Activated CD4-positive, alpha-beta T cell treated with anti-CD3 and anti-CD28 coated beads for 36 hours (primary cell): ENCODE measurements at regions of chr16 and their contacts with region 1.

Region 1: DNA sequence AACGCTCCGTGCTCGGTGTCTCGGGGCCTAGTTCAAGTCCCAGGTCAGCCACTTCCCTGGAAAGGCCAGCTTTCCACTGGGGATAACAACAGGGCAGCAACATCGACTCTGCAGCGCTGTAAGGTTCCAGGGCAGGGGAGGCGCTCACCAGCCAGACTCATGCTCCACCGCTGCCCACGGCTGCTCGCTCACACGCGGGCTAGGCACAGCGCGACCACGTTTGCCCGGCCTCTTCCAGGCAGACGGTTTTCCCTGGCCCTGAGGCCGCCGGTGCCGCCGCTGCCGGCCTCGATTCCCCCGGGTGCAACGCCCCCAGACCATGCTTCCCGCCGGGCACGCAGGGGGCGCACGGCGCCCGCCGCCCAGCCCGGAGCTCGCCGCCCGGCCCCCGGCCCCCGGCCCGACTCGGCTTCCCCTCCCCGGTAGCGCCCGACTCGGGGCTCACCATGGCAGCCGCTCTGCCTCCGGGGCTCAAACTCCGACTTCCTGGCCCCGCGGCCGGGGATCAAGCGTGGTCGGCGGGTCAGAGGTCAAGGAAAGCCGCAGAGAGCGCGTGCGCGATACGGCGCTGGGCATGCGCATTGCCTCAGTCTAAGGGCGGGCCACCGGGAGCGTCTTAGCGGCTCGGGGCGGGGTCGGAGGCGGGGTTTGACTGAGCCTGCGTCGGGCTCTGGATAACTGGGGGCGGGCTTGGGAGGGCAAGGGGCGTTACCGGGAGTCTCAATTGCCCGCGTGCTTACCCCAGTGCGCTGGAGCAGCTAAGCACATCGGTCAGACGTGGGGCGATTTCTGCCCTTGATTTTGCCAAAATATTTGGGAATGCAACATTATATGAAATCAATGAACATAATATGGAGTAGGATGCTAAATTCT is at the start of gene PAM16:
- DNase-seq: peak; percentile 99
- ATAC-seq: peak; percentile 96
- H3K4me3 Mint-ChIP-seq: peak within 1 kb of the TSS; percentile 89
- H3K27ac Mint-ChIP-seq: peak within 1 kb of the TSS; percentile 88
- H3K4me1 Mint-ChIP-seq: peaks cover 20% of the 10 kb centered on the region
- H3K27me3 Mint-ChIP-seq: no peaks in the 10 kb centered on the region
- total RNA-seq, gene PAM16: 62.8 to 67.8 TPM

Region 2: GRCh38 chr16:4116337-4117249 is 234.4 kb before region 1 on chr16 and contains the start of gene ADCY9:
- CTCF ChIA-PET with region 1: no interaction called
- POLR2A ChIA-PET with region 1: no interaction called
- intact Hi-C with region 1: loop called in 1 of 2 experiments (anchors 2 kb)
- DNase-seq: peak; percentile 86
- ATAC-seq: peak; percentile 75
- H3K4me3 Mint-ChIP-seq: peak within 1 kb of the TSS; percentile 78
- H3K27ac Mint-ChIP-seq: peak within 1 kb of the TSS; percentile 78
- H3K4me1 Mint-ChIP-seq: peaks cover 36% of the 10 kb centered on the region
- H3K27me3 Mint-ChIP-seq: peaks cover 7% of the 10 kb centered on the region
- total RNA-seq, gene ADCY9: 5.3 to 6.2 TPM

Region 3: GRCh38 chr16:4416200-4417032 is 65.4 kb after region 1 on chr16 and contains the start of gene CORO7:
- CTCF ChIA-PET with region 1: no interaction called
- POLR2A ChIA-PET with region 1: no interaction called
- intact Hi-C with region 1: loop called (anchors 1 to 5 kb)
- DNase-seq: peak; percentile 98
- ATAC-seq: peak; percentile 81
- H3K4me3 Mint-ChIP-seq: peak within 1 kb of the TSS; percentile 86
- H3K27ac Mint-ChIP-seq: peak within 1 kb of the TSS; percentile 84
- H3K4me1 Mint-ChIP-seq: peaks cover 29% of the 10 kb centered on the region
- H3K27me3 Mint-ChIP-seq: no peaks in the 10 kb centered on the region
- total RNA-seq, gene CORO7: 65.0 to 67.1 TPM

Region 4: GRCh38 chr16:4544473-4544872 is 193.4 kb after region 1 on chr16:
- CTCF ChIA-PET with region 1: no interaction called
- POLR2A ChIA-PET with region 1: no interaction called
- intact Hi-C with region 1: loop called in 1 of 2 experiments (anchors 2 kb)
- DNase-seq: no peak
- ATAC-seq: no peak
- H3K4me3 Mint-ChIP-seq: no peak overlapping the region
- H3K27ac Mint-ChIP-seq: no peak overlapping the region
- H3K4me1 Mint-ChIP-seq: peaks cover 7% of the 10 kb centered on the region
- H3K27me3 Mint-ChIP-seq: no peaks in the 10 kb centered on the region

Region 5: GRCh38 chr16:4693296-4693955 is 342.4 kb after region 1 on chr16 and contains the start of gene NUDT16L1:
- CTCF ChIA-PET with region 1: no interaction called
- POLR2A ChIA-PET with region 1: no interaction called
- intact Hi-C with region 1: loop called in 1 of 2 experiments (anchors 5 kb)
- DNase-seq: peak; percentile 98
- ATAC-seq: peak; percentile 95
- H3K4me3 Mint-ChIP-seq: peak within 1 kb of the TSS; percentile 77
- H3K27ac Mint-ChIP-seq: peak within 1 kb of the TSS; percentile 83
- H3K4me1 Mint-ChIP-seq: peaks cover 17% of the 10 kb centered on the region
- H3K27me3 Mint-ChIP-seq: no peaks in the 10 kb centered on the region
- total RNA-seq, gene NUDT16L1: 16.4 to 22.5 TPM

Region 6: DNA sequence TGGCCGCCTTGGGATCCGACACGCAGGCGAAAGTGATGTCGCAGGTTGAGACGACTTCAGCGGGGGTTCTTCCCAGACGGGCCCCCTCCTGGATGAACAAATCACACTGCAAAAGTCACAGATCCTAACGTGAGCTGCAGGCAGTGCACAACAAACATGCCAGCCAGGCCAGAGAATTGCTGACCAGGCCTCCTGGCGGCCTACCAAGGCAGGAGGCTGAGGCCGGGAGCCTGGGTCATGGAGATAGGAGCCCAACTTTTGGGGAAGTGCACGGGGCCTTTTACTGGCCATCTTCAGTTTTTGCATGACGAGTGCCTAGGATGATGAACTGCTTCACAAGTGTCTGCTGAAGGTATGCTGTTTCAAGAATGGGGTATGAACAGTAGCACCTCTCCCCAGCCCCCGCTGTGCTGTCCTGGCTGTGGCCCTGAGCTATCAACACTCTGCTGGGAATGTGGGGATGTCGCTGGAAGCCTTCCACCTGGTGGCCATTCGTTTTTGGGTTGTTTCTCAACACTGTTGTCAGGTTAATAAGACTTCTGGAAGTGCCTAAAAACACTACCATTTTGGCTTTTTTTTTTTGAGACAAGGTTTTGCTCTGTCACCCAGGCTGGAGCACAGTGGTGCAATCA is 463.6 kb after region 1 on chr16:
- CTCF ChIA-PET with region 1: no interaction called
- POLR2A ChIA-PET with region 1: no interaction called
- intact Hi-C with region 1: no loop called
- DNase-seq: no peak
- ATAC-seq: no peak
- H3K4me3 Mint-ChIP-seq: no peak overlapping the region
- H3K27ac Mint-ChIP-seq: no peak overlapping the region
- H3K4me1 Mint-ChIP-seq: no peaks in the 10 kb centered on the region
- H3K27me3 Mint-ChIP-seq: no peaks in the 10 kb centered on the region